ENCODE measurements at regions of chr1 and their contacts with region 1.

Region 1: GRCh38 chr1:211501711-211502400 is 9.9 kb upstream of the RD3 start:
- DNase-seq: peak; percentile 29
- H3K4me3 ChIP-seq: no peak overlapping the region
- H3K27ac ChIP-seq: no peak overlapping the region
- H3K27me3 ChIP-seq: peaks cover 47% of the 10 kb centered on the region
- CTCF ChIP-seq: no peak

Region 2: GRCh38 chr1:211476200-211476849 is 25.5 kb before region 1 on chr1:
- CTCF ChIA-PET with region 1: interaction called, 19 read pairs
- POLR2A ChIA-PET with region 1: no interaction called
- DNase-seq: peak; percentile 38
- H3K4me3 ChIP-seq: no peak overlapping the region
- H3K27ac ChIP-seq: no peak overlapping the region
- H3K27me3 ChIP-seq: peaks cover 33% of the 10 kb centered on the region
- CTCF ChIP-seq: peak; percentile 92

Measured in AG04450 (cell line).